H1 (cell line): ENCODE measurements at regions of chr2 and their contacts with region 1.

Region 1: DNA sequence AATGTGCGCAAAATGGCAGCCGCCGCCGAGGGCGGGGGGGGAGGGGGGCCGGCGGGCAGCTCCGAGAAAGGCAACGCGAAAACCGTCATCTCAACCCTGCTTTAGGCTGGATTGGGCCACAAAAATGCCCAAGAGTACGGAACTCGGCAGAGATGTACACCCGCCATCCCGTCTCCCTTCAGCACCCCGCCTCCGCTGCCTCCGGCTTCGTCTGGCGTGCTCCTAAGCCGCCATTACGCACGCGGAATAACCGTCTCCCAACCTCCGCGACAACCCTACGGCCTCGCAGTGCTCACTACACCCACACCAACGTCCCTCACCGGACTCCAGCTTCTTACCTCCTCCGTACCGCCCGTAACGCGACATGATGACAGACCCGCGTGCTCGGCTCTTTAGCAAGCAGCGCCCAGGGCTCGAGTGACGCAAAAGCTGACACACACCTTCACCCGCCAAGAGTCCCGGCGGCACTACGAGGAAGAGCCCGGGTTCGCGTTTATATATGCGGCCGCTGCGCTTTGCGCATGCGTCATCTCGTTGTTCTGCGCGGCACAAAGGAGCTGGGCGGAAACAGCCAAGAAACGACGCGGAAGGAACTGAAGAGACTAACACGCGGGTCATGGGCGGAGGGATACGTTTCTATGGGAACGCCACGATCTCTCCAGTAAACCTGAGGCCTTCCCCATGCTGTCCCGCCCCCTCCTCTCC is at the start of gene SRSF7:
- DNase-seq: peak; percentile 98 to 99
- H3K4me3 ChIP-seq: peak within 1 kb of the TSS; percentile 93 to 100 (median 97)
- H3K27ac ChIP-seq: peak within 1 kb of the TSS; percentile 100
- H3K4me1 ChIP-seq: peaks cover 0 to 8% (median 2%) of the 10 kb centered on the region in 4 experiments; a peak in 3 of 7 replicates
- H3K27me3 ChIP-seq: no peaks in the 10 kb centered on the region
- CTCF ChIP-seq: no peak
- EP300 ChIP-seq: 0 out of 3 replicates have a peak, but pooled peaks of 1 of the 2 experiments have one; percentile 63
- POLR2A ChIP-seq: peak; percentile 100
- RAD21 ChIP-seq: peak; percentile 2 to 6; a peak in 1 of 4 replicates
- total RNA-seq, gene SRSF7: 370 and 378 TPM in 2 replicates

Region 2: GRCh38 chr2:38554973-38555595 is 196.0 kb before region 1 on chr2:
- CTCF ChIA-PET with region 1: interaction called, 3 read pairs
- POLR2A ChIA-PET with region 1: interaction called, 13 read pairs
- DNase-seq: no peak
- H3K4me3 ChIP-seq: no peak overlapping the region
- H3K27ac ChIP-seq: no peak overlapping the region
- H3K4me1 ChIP-seq: no peaks in the 10 kb centered on the region
- H3K27me3 ChIP-seq: no peaks in the 10 kb centered on the region
- CTCF ChIP-seq: peak in 2 of 3 experiments; percentile 43 to 66; a peak in 2 of 4 replicates
- EP300 ChIP-seq: no peak
- POLR2A ChIP-seq: no peak
- RAD21 ChIP-seq: peak; percentile 35; a peak in 2 of 4 replicates

Region 3: DNA sequence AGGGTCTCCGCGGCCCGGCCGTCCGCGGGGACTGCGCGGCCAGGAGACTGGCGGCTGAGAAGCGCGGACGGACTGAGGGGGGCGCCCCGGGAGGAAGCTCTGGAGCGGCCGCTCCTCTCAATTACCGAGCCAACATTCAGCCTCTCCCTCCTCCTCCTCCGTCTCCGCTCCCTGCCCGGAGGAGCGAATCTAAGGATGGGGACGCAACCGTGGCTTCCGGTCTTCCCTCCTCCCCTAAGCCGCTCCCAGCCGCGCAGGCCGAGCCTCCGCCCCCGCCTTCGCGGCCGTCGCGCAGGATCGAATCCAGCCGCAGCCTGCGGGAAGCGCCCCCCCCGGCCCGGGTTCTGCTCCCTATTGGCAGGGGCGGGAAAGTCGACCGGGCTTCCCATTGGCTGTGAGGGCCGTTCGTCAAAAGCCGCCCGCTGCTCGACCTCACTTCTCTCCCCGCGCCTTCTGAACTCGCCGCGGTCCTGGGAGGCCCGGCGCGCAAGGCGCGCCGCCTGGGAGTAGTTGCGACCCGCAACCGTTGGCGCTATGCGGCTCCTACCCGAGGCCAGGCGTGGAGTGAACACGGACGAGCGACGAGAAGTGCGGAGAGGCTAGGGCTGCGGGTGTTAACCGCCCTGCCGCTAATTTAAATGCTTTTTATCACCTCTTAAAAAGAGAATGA is 148.2 kb before region 1 on chr2 and contains the start of gene HNRNPLL:
- CTCF ChIA-PET with region 1: no interaction called
- POLR2A ChIA-PET with region 1: interaction called, 334 read pairs
- DNase-seq: peak; percentile 92 to 99
- H3K4me3 ChIP-seq: peak within 1 kb of the TSS; percentile 80 to 94 (median 84)
- H3K27ac ChIP-seq: peak within 1 kb of the TSS; percentile 91
- H3K4me1 ChIP-seq: peaks cover 0 to 9% (median 3%) of the 10 kb centered on the region in 4 experiments; a peak in 3 of 7 replicates
- H3K27me3 ChIP-seq: no peaks in the 10 kb centered on the region
- CTCF ChIP-seq: peak in 1 of 3 experiments; percentile 1; a peak in 1 of 4 replicates
- EP300 ChIP-seq: no peak
- POLR2A ChIP-seq: peak; percentile 88 to 93
- RAD21 ChIP-seq: no peak
- total RNA-seq, gene HNRNPLL: 69.3 TPM in 2 replicates

Region 4: GRCh38 chr2:38765149-38765548 is 14.1 kb after region 1 on chr2:
- CTCF ChIA-PET with region 1: interaction called, 6 read pairs
- POLR2A ChIA-PET with region 1: interaction called, 153 read pairs
- DNase-seq: no peak
- H3K4me3 ChIP-seq: no peak overlapping the region
- H3K27ac ChIP-seq: no peak overlapping the region
- H3K4me1 ChIP-seq: no peaks in the 10 kb centered on the region
- H3K27me3 ChIP-seq: no peaks in the 10 kb centered on the region
- CTCF ChIP-seq: no peak
- EP300 ChIP-seq: no peak
- POLR2A ChIP-seq: no peak
- RAD21 ChIP-seq: no peak

Region 5: GRCh38 chr2:38788306-38788705 is 37.3 kb after region 1 on chr2:
- CTCF ChIA-PET with region 1: no interaction called
- POLR2A ChIA-PET with region 1: interaction called, 30 read pairs
- DNase-seq: no peak
- H3K4me3 ChIP-seq: no peak overlapping the region
- H3K27ac ChIP-seq: no peak overlapping the region
- H3K4me1 ChIP-seq: peaks cover 0 to 2% (median 0%) of the 10 kb centered on the region in 4 experiments; a peak in 1 of 7 replicates
- H3K27me3 ChIP-seq: no peaks in the 10 kb centered on the region
- CTCF ChIP-seq: no peak
- EP300 ChIP-seq: no peak
- POLR2A ChIP-seq: no peak
- RAD21 ChIP-seq: no peak

Region 6: DNA sequence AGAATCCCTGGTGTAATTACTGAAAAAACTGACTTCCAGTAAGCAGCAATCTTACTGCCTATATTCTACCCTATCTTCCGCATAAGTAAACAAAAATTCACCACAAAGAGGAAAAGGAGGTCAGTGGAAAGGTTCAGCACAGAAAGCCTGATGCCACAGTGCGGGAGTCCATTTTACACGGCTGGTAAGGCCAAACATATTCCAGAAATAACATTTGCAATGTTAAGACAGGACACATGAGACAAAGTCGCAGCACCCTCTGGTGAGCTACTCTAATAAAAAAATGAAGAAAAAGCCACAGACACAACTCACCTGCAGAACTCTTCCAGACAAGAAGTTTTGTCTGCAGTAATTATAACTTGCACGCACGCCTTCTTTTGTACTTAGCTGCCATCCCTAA is 67.5 kb after region 1 on chr2:
- CTCF ChIA-PET with region 1: no interaction called
- POLR2A ChIA-PET with region 1: interaction called, 10 read pairs
- DNase-seq: no peak
- H3K4me3 ChIP-seq: no peak overlapping the region
- H3K27ac ChIP-seq: no peak overlapping the region
- H3K4me1 ChIP-seq: no peaks in the 10 kb centered on the region
- H3K27me3 ChIP-seq: no peaks in the 10 kb centered on the region
- CTCF ChIP-seq: no peak
- EP300 ChIP-seq: no peak
- POLR2A ChIP-seq: no peak
- RAD21 ChIP-seq: no peak